ENCODE measurements at regions of chr13 and their contacts with region 1.

Region 1: GRCh38 chr13:95191821-95192563 is 109.3 kb downstream of the ABCC4 start:
- DNase-seq: peak; percentile 93
- ATAC-seq: peak; percentile 98
- H3K4me3 Mint-ChIP-seq: no peak overlapping the region
- H3K27ac Mint-ChIP-seq: no peak overlapping the region
- H3K4me1 Mint-ChIP-seq: peaks cover 6% of the 10 kb centered on the region
- H3K27me3 Mint-ChIP-seq: no peaks in the 10 kb centered on the region
- CTCF ChIP-seq: peak; percentile 92

Region 2: DNA sequence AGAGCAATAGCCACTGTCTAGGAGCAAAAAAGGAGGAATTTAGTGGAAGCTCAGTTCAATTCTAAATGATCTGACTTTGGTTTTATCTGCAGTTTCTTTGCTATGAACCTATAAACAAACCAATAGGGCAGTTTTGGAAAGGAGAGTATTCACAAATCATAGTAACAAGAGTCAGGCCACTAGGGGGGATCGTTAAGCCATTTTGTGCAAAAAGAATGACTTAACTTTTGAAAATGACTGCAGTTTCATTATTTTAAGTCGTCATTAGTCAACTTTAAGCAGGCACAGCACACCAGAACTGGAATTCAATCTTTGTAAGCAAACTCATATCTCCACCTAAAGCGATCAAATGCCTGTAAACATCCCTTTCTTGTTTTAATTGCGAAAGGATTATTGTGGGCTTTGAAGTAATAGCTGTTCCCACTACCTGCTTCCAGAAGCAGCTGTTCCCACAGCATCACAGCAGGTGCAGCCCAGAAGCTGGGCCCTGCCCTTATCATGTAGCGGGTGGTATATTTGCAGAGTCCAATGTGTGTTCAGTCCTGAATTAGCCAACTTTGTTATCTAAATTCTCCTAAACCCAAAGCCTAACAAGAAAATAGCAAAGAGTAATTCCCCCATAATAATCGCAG is 531.2 kb before region 1 on chr13:
- CTCF ChIA-PET with region 1: interaction called, 13 read pairs
- POLR2A ChIA-PET with region 1: no interaction called
- DNase-seq: no peak
- ATAC-seq: peak; percentile 62
- H3K4me3 Mint-ChIP-seq: no peak overlapping the region
- H3K27ac Mint-ChIP-seq: no peak overlapping the region
- H3K4me1 Mint-ChIP-seq: peaks cover 38% of the 10 kb centered on the region
- H3K27me3 Mint-ChIP-seq: peaks cover 5% of the 10 kb centered on the region
- CTCF ChIP-seq: 0 out of 2 replicates have a peak, but pooled peaks have one; percentile 22

Region 3: DNA sequence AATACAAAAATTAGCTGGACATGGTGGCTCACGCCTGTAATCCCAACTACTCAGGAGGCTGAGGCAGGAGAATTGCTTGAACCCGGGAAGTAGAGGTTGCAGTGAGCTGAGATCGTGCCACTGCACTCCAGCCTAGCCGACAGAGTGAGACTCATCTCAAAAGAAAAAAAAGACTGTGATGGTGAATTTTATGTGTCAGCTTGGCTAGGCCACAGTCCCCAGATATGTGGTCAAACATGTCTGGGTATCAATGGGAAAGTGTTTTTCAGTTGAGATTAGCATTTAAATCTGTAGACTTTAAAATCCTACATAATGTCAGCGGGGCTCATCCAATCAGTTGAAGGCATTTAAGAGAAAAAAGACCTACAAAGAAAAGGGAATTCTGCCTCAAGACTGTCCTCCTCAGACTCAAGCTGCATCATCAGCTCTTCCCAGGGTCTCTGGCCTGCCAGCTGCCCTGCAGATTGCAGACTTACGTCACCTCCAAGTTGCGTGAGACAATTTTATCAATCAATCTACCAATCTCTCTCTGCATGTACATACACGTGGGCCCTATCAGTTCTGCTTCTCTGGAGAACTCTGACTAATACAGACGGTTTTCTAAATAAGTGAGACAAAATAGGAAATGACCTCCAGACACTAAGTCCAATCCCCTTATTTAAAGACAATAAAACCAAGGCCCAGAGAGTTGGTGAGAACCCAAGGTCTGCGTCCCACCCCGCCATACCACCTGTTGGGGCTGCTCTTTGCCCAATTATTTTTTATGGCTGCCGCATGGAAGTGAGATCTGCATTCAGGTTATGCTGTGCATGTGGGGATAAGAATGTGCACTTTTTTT is 10.0 kb after region 1 on chr13:
- CTCF ChIA-PET with region 1: interaction called, 11 read pairs
- POLR2A ChIA-PET with region 1: no interaction called
- DNase-seq: no peak
- ATAC-seq: no peak
- H3K4me3 Mint-ChIP-seq: no peak overlapping the region
- H3K27ac Mint-ChIP-seq: no peak overlapping the region
- H3K4me1 Mint-ChIP-seq: 0 out of 2 replicates have a peak, but pooled peaks cover 3% of the 10 kb centered on the region
- H3K27me3 Mint-ChIP-seq: no peaks in the 10 kb centered on the region
- CTCF ChIP-seq: no peak

Region 4: DNA sequence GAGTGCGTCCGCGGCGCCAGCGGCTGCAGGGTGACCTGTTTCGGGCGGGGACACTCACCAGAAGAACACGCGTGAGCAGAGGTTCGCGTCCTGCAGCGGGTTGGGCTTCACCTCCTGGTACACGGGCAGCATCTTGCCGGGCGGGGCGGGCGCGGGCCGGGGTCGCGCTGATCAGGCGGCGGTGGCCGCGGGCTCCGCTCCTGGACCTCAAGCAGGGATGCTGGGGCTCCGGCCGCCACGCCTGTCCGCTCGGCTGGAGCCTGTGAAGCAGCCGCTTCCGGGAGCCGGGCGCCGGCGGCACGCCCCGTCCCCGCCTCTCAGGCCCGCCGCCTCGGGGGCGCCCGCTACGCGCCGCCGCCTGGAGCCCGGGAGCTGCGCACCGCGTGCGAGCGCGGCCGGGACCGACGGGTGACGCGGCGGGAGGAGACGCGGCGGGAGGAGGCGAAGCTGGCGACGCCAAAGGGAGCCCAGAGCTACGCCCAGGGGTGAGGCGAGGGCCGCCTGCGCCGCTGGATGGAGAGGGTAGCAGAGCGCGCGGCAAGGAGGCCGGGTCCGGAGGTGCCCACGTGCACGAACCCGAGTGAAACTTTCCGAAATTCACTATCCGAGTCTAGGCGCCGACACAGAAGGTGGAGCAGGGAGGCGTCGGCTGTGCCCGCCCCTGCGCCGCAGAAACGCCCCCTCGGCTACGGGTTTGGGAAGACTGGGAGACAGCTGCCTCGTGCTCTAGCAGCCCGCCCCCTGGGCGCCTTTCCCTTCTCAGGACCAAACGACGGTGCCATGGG is 109.4 kb after region 1 on chr13 and contains the start of gene ABCC4:
- CTCF ChIA-PET with region 1: interaction called, 16 read pairs
- POLR2A ChIA-PET with region 1: no interaction called
- DNase-seq: peak; percentile 69
- ATAC-seq: peak; percentile 76
- H3K4me3 Mint-ChIP-seq: peak within 1 kb of the TSS; percentile 80
- H3K27ac Mint-ChIP-seq: no peak within 1 kb of the TSS
- H3K4me1 Mint-ChIP-seq: peaks cover 11% of the 10 kb centered on the region
- H3K27me3 Mint-ChIP-seq: peaks cover 41% of the 10 kb centered on the region
- CTCF ChIP-seq: no peak
- total RNA-seq, gene ABCC4: 7.2 to 7.8 TPM (median 7.2 TPM) in 3 replicates

Region 5: DNA sequence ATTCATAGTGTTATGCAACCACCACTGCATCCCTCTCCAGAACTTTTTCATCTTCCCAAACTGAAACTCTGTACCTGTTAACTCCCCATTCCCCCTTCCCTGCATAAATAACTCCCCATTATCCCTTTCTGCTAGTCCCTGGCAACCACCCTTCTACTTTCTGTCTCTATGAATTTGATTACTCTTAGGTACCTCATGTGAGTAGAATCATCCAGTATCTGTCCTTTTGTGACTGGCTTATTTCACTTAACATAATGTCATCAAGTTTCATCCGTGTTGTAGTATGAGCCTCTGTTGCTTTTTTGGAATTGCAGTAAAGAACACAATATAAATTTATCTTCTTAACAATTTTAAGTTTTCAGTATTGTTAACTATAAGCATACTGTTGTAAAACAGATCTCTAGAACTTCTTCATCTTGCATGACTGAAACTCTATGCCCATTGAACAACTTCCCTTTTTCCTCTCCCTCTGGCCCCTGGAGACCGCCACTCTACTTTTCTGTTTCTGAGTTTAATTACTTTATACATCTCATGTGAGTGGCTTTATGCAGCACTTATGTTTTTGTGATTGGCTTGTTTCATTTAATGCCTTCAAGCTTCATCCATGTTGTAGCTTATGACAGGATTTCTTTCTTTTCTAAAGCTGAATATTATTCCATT is 196.6 kb after region 1 on chr13:
- CTCF ChIA-PET with region 1: interaction called, 11 read pairs
- POLR2A ChIA-PET with region 1: no interaction called
- DNase-seq: no peak
- ATAC-seq: no peak
- H3K4me3 Mint-ChIP-seq: no peak overlapping the region
- H3K27ac Mint-ChIP-seq: no peak overlapping the region
- H3K4me1 Mint-ChIP-seq: no peaks in the 10 kb centered on the region
- H3K27me3 Mint-ChIP-seq: no peaks in the 10 kb centered on the region
- CTCF ChIP-seq: no peak

Region 6: DNA sequence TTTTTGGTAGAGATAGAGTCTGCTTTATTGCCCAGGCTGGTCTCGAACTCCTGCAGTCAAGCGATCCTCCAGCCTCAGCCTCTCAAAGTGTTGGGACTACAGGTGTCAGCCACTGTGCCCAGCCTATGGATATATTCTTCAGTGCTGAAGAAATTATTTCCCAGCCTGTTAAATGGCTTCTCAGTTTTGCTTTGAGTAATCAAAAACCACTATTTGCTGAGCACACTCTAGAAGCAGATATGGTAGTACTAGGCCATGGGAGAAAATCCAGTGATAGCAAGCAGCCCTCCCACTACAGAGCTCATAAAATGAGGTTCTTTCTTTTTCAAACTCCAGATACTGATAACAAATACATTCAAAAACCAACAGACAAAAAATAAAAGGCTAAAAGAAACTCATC is 280.0 kb after region 1 on chr13:
- CTCF ChIA-PET with region 1: interaction called, 34 read pairs
- POLR2A ChIA-PET with region 1: no interaction called
- DNase-seq: no peak
- ATAC-seq: no peak
- H3K4me3 Mint-ChIP-seq: no peak overlapping the region
- H3K27ac Mint-ChIP-seq: no peak overlapping the region
- H3K4me1 Mint-ChIP-seq: peaks cover 13% of the 10 kb centered on the region
- H3K27me3 Mint-ChIP-seq: no peaks in the 10 kb centered on the region; the same call in 1 of the 2 replicates
- CTCF ChIP-seq: no peak

Measured in WTC11 (cell line).